WTC11 (cell line): ENCODE measurements at regions of chr16 and their contacts with region 1.

Region 1: GRCh38 chr16:13036600-13036999 is 135.2 kb downstream of the SHISA9 start:
- DNase-seq: peak; percentile 70
- ATAC-seq: no peak
- H3K4me3 Mint-ChIP-seq: no peak overlapping the region
- H3K27ac Mint-ChIP-seq: no peak overlapping the region
- H3K4me1 Mint-ChIP-seq: peaks cover 21% of the 10 kb centered on the region
- H3K27me3 Mint-ChIP-seq: no peaks in the 10 kb centered on the region
- CTCF ChIP-seq: no peak

Region 2: GRCh38 chr16:13056607-13057006 is 20.0 kb after region 1 on chr16:
- CTCF ChIA-PET with region 1: no interaction called
- POLR2A ChIA-PET with region 1: no interaction called
- DNase-seq: no peak
- ATAC-seq: no peak
- H3K4me3 Mint-ChIP-seq: no peak overlapping the region
- H3K27ac Mint-ChIP-seq: peak overlapping the region; percentile 51; the same call in 1 of the 2 replicates
- H3K4me1 Mint-ChIP-seq: peaks cover 37% of the 10 kb centered on the region
- H3K27me3 Mint-ChIP-seq: no peaks in the 10 kb centered on the region
- CTCF ChIP-seq: no peak

Region 3: GRCh38 chr16:13148836-13149235 is 112.2 kb after region 1 on chr16:
- CTCF ChIA-PET with region 1: no interaction called
- POLR2A ChIA-PET with region 1: interaction called, 14 read pairs
- DNase-seq: no peak
- ATAC-seq: no peak
- H3K4me3 Mint-ChIP-seq: no peak overlapping the region
- H3K27ac Mint-ChIP-seq: no peak overlapping the region; the same call in 1 of the 2 replicates
- H3K4me1 Mint-ChIP-seq: peaks cover 29% of the 10 kb centered on the region
- H3K27me3 Mint-ChIP-seq: no peaks in the 10 kb centered on the region
- CTCF ChIP-seq: no peak